GM12878 (cell line): ENCODE measurements at regions of chr18 and their contacts with region 1.

Region 1: DNA sequence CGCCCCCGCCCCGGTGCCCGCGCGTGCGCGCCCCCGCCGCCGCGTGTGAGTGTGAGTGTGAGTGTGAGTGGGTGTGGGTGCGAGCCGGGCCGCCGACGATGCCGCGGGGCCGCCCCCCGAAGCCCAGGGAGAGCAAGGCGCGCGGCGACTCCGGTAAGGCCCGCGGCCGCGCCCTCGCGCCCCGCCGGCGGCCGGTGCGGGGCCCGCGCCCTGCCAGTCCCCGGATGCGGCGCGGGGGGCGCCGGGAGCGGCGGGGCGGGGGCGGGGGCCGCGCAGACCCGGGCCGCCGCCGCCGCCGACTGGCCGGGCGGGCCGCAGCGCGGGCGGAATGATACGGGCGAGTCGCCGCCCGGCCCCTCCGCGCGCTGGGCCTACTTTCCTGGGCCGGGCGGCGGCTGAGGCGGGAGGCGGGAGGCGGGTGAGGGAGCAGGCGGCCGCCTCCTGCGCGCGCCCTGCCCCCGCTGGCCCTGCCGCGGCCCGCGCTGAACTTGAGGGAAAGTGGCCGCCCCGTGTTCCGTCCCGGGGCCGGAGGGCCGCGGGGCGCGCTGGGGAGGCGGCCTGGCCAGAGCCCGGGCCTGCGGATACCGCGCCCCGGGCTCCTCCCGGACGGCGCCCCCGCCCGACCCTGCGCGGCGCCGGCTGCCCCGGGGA is at the start of gene ZNF236:
- DNase-seq: no peak
- ATAC-seq: peak; percentile 47
- H3K4me3 ChIP-seq: peak within 1 kb of the TSS; percentile 100
- H3K27ac ChIP-seq: peak within 1 kb of the TSS; percentile 95
- H3K4me1 ChIP-seq: peaks cover 16% of the 10 kb centered on the region
- H3K27me3 ChIP-seq: no peaks in the 10 kb centered on the region
- CTCF ChIP-seq: no peak
- EP300 ChIP-seq: no peak
- POLR2A ChIP-seq: peak; percentile 76
- RAD21 ChIP-seq: no peak
- polyA plus RNA-seq, gene ZNF236: 1.0 to 1.3 TPM

Region 2: GRCh38 chr18:76914314-76914713 is 91.7 kb after region 1 on chr18:
- CTCF ChIA-PET with region 1: no interaction called
- POLR2A ChIA-PET with region 1: no interaction called
- RAD21 ChIA-PET with region 1: no interaction called
- SMC1A ChIA-PET with region 1: no interaction called
- in situ Hi-C with region 1: no loop called
- intact Hi-C with region 1: no loop called
- DNase-seq: no peak
- ATAC-seq: peak; percentile 34; the same call in 2 of the 3 replicates
- H3K4me3 ChIP-seq: no peak overlapping the region
- H3K27ac ChIP-seq: no peak overlapping the region
- H3K4me1 ChIP-seq: no peaks in the 10 kb centered on the region; the same call in 1 of the 2 replicates
- H3K27me3 ChIP-seq: no peaks in the 10 kb centered on the region
- CTCF ChIP-seq: no peak
- EP300 ChIP-seq: no peak
- POLR2A ChIP-seq: no peak
- RAD21 ChIP-seq: no peak

Region 3: GRCh38 chr18:76963936-76964335 is 141.3 kb after region 1 on chr18:
- CTCF ChIA-PET with region 1: interaction called, 10 read pairs
- POLR2A ChIA-PET with region 1: interaction called, 5 read pairs
- RAD21 ChIA-PET with region 1: interaction called, 3 read pairs
- SMC1A ChIA-PET with region 1: interaction called, 4 read pairs
- in situ Hi-C with region 1: no loop called
- intact Hi-C with region 1: no loop called
- DNase-seq: no peak
- ATAC-seq: peak; percentile 63
- H3K4me3 ChIP-seq: 0 out of 2 replicates have a peak overlapping the region, but pooled peaks have one; percentile 17
- H3K27ac ChIP-seq: peak overlapping the region; percentile 46
- H3K4me1 ChIP-seq: peaks cover 21% of the 10 kb centered on the region
- H3K27me3 ChIP-seq: no peaks in the 10 kb centered on the region
- CTCF ChIP-seq: no peak
- EP300 ChIP-seq: no peak
- POLR2A ChIP-seq: no peak
- RAD21 ChIP-seq: no peak

Region 4: DNA sequence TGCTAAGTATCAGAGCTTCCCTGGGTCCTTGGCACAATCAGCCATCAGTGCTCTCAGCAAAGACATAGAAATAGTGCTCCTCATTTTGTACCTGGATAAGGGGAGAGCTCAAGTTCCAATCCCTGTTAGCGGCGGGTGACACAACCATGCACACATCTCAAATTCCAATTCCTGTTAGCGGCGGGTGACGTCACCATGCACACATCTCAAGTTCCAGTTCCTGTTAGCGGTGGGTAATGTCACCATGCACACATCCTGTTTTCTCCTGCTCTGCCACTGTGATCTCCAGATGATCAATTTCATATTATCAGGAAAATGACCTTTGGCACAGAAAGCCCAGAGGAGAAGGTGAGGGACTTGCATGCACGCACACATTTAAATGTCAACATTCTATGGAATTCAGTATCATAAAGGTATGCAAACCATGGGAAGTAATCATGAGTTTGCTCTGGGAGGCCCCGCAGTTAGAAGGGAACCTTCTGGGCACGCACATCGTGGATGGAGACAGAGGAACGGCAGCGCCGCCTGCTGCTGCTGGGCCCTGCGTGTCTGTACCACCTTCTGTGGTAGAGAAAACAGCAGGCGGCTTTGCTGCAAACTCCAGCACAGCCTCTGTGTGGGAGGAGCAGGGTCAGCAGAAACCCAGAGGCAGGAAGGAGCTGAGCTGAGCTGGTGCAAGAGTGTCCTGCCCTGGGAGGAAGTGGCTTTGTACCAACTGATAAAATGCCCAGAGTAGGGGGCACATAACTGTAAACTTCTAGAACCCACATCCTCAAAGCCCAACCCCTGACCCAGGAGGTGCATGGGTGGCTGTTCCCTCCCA is 232.2 kb after region 1 on chr18:
- CTCF ChIA-PET with region 1: interaction called, 4 read pairs
- POLR2A ChIA-PET with region 1: no interaction called
- RAD21 ChIA-PET with region 1: no interaction called
- SMC1A ChIA-PET with region 1: no interaction called
- in situ Hi-C with region 1: no loop called
- intact Hi-C with region 1: loop called (anchors 5 kb)
- DNase-seq: peak; percentile 80
- ATAC-seq: peak; percentile 93
- H3K4me3 ChIP-seq: peak overlapping the region; percentile 53
- H3K27ac ChIP-seq: peak overlapping the region; percentile 88
- H3K4me1 ChIP-seq: peaks cover 46% of the 10 kb centered on the region
- H3K27me3 ChIP-seq: no peaks in the 10 kb centered on the region
- CTCF ChIP-seq: peak; percentile 73 to 78 (median 75)
- EP300 ChIP-seq: peak; percentile 70 to 74
- POLR2A ChIP-seq: no peak; the same call in 1 of the 2 replicates
- RAD21 ChIP-seq: peak; percentile 58